CD8-positive, alpha-beta T cell (primary cell): ENCODE measurements at regions of chr1 and their contacts with region 1.

Region 1: GRCh38 chr1:26321315-26322041 is 3.7 kb downstream of the CD52 start:
- DNase-seq: peak; percentile 91 to 99 (median 93)
- ATAC-seq: peak; percentile 73
- H3K4me3 ChIP-seq: peak overlapping the region; percentile 87 to 93
- H3K4me3 Mint-ChIP-seq: peak overlapping the region; percentile 88
- H3K27ac ChIP-seq: peak overlapping the region in 1 of 2 experiments; percentile 46
- H3K27ac Mint-ChIP-seq: peak overlapping the region; percentile 96
- H3K4me1 ChIP-seq: peaks cover 41% of the 10 kb centered on the region
- H3K4me1 Mint-ChIP-seq: peaks cover 53% of the 10 kb centered on the region
- H3K27me3 ChIP-seq: no peaks in the 10 kb centered on the region
- H3K27me3 Mint-ChIP-seq: no peaks in the 10 kb centered on the region
- CTCF ChIP-seq: peak; percentile 86

Region 2: DNA sequence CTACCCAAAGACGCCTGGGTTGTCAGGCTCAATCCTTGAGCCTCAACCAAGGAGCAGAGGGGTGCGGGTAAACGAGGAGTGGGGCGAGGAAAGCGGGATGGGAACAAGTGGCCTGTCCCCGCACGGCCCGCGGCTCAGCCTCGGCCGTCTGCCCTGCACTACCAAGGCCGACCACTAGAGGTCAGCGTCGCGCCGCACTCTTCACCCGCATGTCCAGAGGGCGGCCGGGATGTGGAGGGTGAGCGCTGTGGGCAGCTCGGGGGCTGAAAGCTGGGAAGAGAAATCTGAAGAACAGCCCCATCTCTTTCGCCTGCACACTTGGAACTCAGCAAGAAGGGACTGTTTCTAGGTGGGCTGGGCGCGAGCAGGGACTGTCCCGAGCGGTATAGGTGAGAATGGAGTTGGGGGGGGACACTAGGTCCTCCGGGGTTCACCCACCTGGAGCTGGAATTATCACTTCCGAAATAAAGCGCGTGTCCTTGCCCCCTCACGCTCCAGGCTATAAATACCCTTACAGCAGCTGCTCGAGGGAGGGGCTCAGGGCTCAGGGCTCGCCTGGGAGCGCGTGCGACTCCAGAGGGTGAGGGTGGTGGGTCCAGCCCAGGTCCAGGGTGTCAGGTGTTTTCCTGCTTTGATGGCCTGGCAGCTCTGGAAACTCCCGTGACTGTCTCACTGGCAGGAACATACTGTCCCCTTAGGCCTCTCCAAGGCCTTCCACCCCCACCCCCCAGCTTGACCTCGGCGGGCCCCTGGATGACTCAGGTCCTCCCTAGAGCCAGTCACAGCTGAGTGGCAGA is 285.3 kb before region 1 on chr1:
- CTCF ChIA-PET with region 1: no interaction called
- POLR2A ChIA-PET with region 1: no interaction called
- intact Hi-C with region 1: loop called in 1 of 2 experiments (anchors 5 kb)
- DNase-seq: peak; percentile 53 to 88 (median 79)
- ATAC-seq: peak; percentile 70
- H3K4me3 ChIP-seq: peak overlapping the region; percentile 85 to 86
- H3K4me3 Mint-ChIP-seq: peak overlapping the region; percentile 97
- H3K27ac ChIP-seq: peak overlapping the region; percentile 46 to 58
- H3K27ac Mint-ChIP-seq: peak overlapping the region; percentile 95
- H3K4me1 ChIP-seq: peaks cover 11% of the 10 kb centered on the region
- H3K4me1 Mint-ChIP-seq: peaks cover 8% of the 10 kb centered on the region
- H3K27me3 ChIP-seq: no peaks in the 10 kb centered on the region
- H3K27me3 Mint-ChIP-seq: no peaks in the 10 kb centered on the region
- CTCF ChIP-seq: peak; percentile 99

Region 3: GRCh38 chr1:26190373-26190987 is 131.0 kb before region 1 on chr1 and contains the start of gene CATSPER4:
- CTCF ChIA-PET with region 1: no interaction called
- POLR2A ChIA-PET with region 1: no interaction called
- intact Hi-C with region 1: loop called in 1 of 2 experiments (anchors 5 kb)
- DNase-seq: peak in 1 of 9 experiments; percentile 42
- ATAC-seq: no peak
- H3K4me3 ChIP-seq: no peak within 1 kb of the TSS
- H3K4me3 Mint-ChIP-seq: no peak within 1 kb of the TSS
- H3K27ac ChIP-seq: no peak within 1 kb of the TSS
- H3K27ac Mint-ChIP-seq: no peak within 1 kb of the TSS
- H3K4me1 ChIP-seq: no peaks in the 10 kb centered on the region
- H3K4me1 Mint-ChIP-seq: peaks cover 5% of the 10 kb centered on the region
- H3K27me3 ChIP-seq: no peaks in the 10 kb centered on the region
- H3K27me3 Mint-ChIP-seq: no peaks in the 10 kb centered on the region
- CTCF ChIP-seq: no peak
- total RNA-seq, gene CATSPER4: not detected

Region 4: GRCh38 chr1:26279456-26280332 is 41.8 kb before region 1 on chr1 and contains the start of gene SH3BGRL3:
- CTCF ChIA-PET with region 1: interaction called, 844 read pairs
- POLR2A ChIA-PET with region 1: interaction called, 666 read pairs
- intact Hi-C with region 1: loop called (anchors 1 kb)
- DNase-seq: peak; percentile 64 to 92 (median 85)
- ATAC-seq: peak; percentile 57
- H3K4me3 ChIP-seq: peak within 1 kb of the TSS; percentile 74 to 93
- H3K4me3 Mint-ChIP-seq: peak within 1 kb of the TSS; percentile 89
- H3K27ac ChIP-seq: peak within 1 kb of the TSS; percentile 69 to 90
- H3K27ac Mint-ChIP-seq: peak within 1 kb of the TSS; percentile 100
- H3K4me1 ChIP-seq: peaks cover 86% of the 10 kb centered on the region
- H3K4me1 Mint-ChIP-seq: peaks cover 86% of the 10 kb centered on the region
- H3K27me3 ChIP-seq: no peaks in the 10 kb centered on the region
- H3K27me3 Mint-ChIP-seq: no peaks in the 10 kb centered on the region
- CTCF ChIP-seq: no peak
- total RNA-seq, gene SH3BGRL3: 187 to 191 TPM

Region 5: GRCh38 chr1:26336477-26337205 is 15.2 kb after region 1 on chr1:
- CTCF ChIA-PET with region 1: interaction called, 12 read pairs
- POLR2A ChIA-PET with region 1: interaction called, 16 read pairs
- intact Hi-C with region 1: no loop called
- DNase-seq: peak; percentile 67 to 91 (median 86)
- ATAC-seq: peak; percentile 86
- H3K4me3 ChIP-seq: peak overlapping the region; percentile 65 to 89
- H3K4me3 Mint-ChIP-seq: peak overlapping the region; percentile 87
- H3K27ac ChIP-seq: no peak overlapping the region
- H3K27ac Mint-ChIP-seq: no peak overlapping the region
- H3K4me1 ChIP-seq: peaks cover 18% of the 10 kb centered on the region
- H3K4me1 Mint-ChIP-seq: peaks cover 13% of the 10 kb centered on the region
- H3K27me3 ChIP-seq: no peaks in the 10 kb centered on the region
- H3K27me3 Mint-ChIP-seq: no peaks in the 10 kb centered on the region
- CTCF ChIP-seq: no peak

Region 6: GRCh38 chr1:26363549-26364448 is 42.3 kb after region 1 on chr1:
- CTCF ChIA-PET with region 1: interaction called, 46 read pairs
- POLR2A ChIA-PET with region 1: interaction called, 9 read pairs
- intact Hi-C with region 1: loop called (anchors 1 to 5 kb)
- DNase-seq: peak; percentile 69 to 94 (median 86)
- ATAC-seq: peak; percentile 56
- H3K4me3 ChIP-seq: no peak overlapping the region
- H3K4me3 Mint-ChIP-seq: no peak overlapping the region
- H3K27ac ChIP-seq: no peak overlapping the region
- H3K27ac Mint-ChIP-seq: peak overlapping the region; percentile 66
- H3K4me1 ChIP-seq: peaks cover 56% of the 10 kb centered on the region
- H3K4me1 Mint-ChIP-seq: peaks cover 54% of the 10 kb centered on the region
- H3K27me3 ChIP-seq: peaks cover 0 to 16% of the 10 kb centered on the region in 2 experiments
- H3K27me3 Mint-ChIP-seq: peaks cover 13% of the 10 kb centered on the region
- CTCF ChIP-seq: peak; percentile 97

Region 7: GRCh38 chr1:26399034-26399433 is 77.6 kb after region 1 on chr1:
- CTCF ChIA-PET with region 1: interaction called, 27 read pairs
- POLR2A ChIA-PET with region 1: interaction called, 4 read pairs
- intact Hi-C with region 1: no loop called
- DNase-seq: no peak
- ATAC-seq: no peak
- H3K4me3 ChIP-seq: no peak overlapping the region
- H3K4me3 Mint-ChIP-seq: no peak overlapping the region
- H3K27ac ChIP-seq: no peak overlapping the region
- H3K27ac Mint-ChIP-seq: no peak overlapping the region
- H3K4me1 ChIP-seq: no peaks in the 10 kb centered on the region
- H3K4me1 Mint-ChIP-seq: peaks cover 3% of the 10 kb centered on the region
- H3K27me3 ChIP-seq: peaks cover 0 to 2% of the 10 kb centered on the region in 2 experiments
- H3K27me3 Mint-ChIP-seq: peaks cover 11% of the 10 kb centered on the region
- CTCF ChIP-seq: no peak